ENCODE measurements at regions of chr5 and their contacts with region 1.

Region 1: DNA sequence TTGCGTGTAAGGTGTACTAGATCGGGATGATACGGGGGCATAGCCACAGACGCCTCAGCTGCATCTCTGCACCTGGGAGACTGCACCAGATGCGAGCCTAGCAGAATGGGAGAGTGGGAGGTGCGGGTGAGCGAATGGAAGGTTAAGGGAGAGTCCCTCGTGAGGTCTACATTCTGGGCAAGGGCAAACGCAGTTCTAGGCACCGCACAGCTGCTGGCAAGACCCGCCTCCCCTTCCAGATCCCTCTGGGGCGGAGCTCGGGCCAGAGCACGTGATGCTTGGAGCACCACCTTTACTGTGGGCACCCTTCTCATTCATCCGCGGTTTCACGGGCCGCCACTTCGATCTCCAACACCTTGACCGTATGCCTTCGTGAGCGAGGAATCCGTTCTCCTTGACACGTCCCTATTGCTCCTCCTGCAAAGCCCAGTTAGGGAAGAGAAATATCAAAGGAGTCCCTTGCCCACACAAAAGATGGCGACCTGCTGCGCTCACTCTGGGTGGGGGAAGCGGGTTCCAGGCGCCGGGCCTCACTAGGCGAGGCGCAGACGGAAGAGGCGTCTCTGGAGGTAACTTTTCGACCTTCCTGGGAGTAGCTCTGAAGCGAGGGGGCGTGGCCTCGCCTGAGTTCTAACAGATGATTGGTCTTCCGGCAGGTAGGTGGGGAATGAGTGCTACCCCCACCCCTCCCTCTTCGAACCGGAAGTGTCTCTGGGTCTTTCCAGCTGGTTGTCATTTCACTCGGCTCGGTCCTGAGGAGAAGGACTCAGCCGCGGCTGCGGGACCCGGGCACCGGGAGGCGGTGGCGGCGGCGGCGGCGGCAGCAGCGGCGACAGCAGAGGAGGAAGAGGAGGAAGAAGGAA is at the start of gene CPEB4:
- DNase-seq: peak; percentile 98 to 99
- ATAC-seq: peak; percentile 96 to 99 (median 96)
- H3K4me3 ChIP-seq: peak within 1 kb of the TSS; percentile 72 to 94 (median 82)
- H3K27ac ChIP-seq: peak within 1 kb of the TSS; percentile 74 to 97 (median 90)
- H3K4me1 ChIP-seq: peaks cover 0 to 77% (median 25%) of the 10 kb centered on the region in 9 donors
- H3K27me3 ChIP-seq: no peaks in the 10 kb centered on the region
- CTCF ChIP-seq: no peak
- total RNA-seq, gene CPEB4: 116 to 279 (median 187) TPM

Region 2: DNA sequence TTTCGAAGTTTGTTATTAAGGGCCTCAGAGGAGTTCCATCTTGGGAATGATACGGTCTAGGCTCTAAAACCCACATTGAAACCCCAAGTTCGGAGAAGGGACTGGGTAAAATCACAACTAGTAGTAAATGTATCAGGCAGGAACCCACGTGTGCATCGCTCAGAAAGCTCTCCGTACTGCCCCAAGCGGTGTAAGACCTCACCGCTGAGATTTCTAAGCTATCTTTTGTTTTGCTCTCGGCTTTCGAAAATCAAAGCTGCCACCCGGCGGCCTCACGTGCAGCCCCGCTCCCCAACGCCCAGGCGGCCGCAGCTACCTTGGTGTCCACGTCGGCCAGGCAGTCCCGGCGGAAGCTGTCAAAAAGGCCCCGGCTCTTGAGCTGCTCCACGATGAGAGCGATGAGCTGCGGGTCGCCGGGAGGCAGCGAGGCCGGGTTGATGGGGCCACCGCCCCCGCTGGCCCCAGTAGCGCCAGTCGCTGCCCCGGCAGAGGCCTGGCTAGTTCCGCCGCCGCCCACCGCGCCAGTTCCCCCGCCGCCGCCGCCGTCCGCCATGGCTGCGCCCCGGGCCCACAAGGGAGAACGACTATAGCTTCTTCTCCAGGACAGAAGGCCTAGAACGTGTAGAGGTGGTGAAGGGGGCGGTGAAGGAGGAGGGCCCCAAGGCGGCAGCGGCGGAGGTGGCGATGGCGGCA is 271.8 kb before region 1 on chr5:
- intact Hi-C with region 1: loop called in 6 of 10 experiments (anchors 1 to 10 kb)
- DNase-seq: peak; percentile 43 to 52
- ATAC-seq: peak; percentile 45 to 75 (median 68)
- H3K4me3 ChIP-seq: peak overlapping the region; percentile 62 to 99 (median 96)
- H3K27ac ChIP-seq: peak overlapping the region; percentile 88 to 98 (median 94)
- H3K4me1 ChIP-seq: peaks cover 0 to 59% (median 49%) of the 10 kb centered on the region in 9 donors
- H3K27me3 ChIP-seq: no peaks in the 10 kb centered on the region
- CTCF ChIP-seq: peak in 8 of 9 donors; percentile 34 to 78 (median 64)

Region 3: GRCh38 chr5:173764321-173765029 is 123.4 kb before region 1 on chr5:
- intact Hi-C with region 1: loop called in 6 of 10 experiments (anchors 2 to 10 kb)
- DNase-seq: peak; percentile 79
- ATAC-seq: peak; percentile 24 to 82 (median 66)
- H3K4me3 ChIP-seq: no peak overlapping the region
- H3K27ac ChIP-seq: peak overlapping the region; percentile 2 to 91 (median 76)
- H3K4me1 ChIP-seq: peaks cover 0 to 58% (median 26%) of the 10 kb centered on the region in 9 donors
- H3K27me3 ChIP-seq: no peaks in the 10 kb centered on the region
- CTCF ChIP-seq: no peak

Region 4: GRCh38 chr5:173925448-173926071 is 37.7 kb after region 1 on chr5:
- intact Hi-C with region 1: loop called in 4 of 10 experiments (anchors 2 to 5 kb)
- DNase-seq: peak; percentile 30 to 41
- ATAC-seq: peak in 1 of 8 donors; percentile 46
- H3K4me3 ChIP-seq: no peak overlapping the region
- H3K27ac ChIP-seq: peak overlapping the region in 9 of 10 donors; percentile 45 to 91 (median 85)
- H3K4me1 ChIP-seq: peaks cover 9 to 100% (median 82%) of the 10 kb centered on the region in 9 donors
- H3K27me3 ChIP-seq: no peaks in the 10 kb centered on the region
- CTCF ChIP-seq: peak in 7 of 9 donors; percentile 37 to 70 (median 58)

Region 5: GRCh38 chr5:173954671-173955521 is 67.1 kb after region 1 on chr5:
- intact Hi-C with region 1: loop called in 2 of 10 experiments (anchors 10 kb)
- DNase-seq: peak in 1 of 2 donors; percentile 21
- ATAC-seq: peak; percentile 74 to 93 (median 90)
- H3K4me3 ChIP-seq: no peak overlapping the region
- H3K27ac ChIP-seq: peak overlapping the region; percentile 60 to 86 (median 76)
- H3K4me1 ChIP-seq: peaks cover 0 to 64% (median 22%) of the 10 kb centered on the region in 9 donors
- H3K27me3 ChIP-seq: no peaks in the 10 kb centered on the region
- CTCF ChIP-seq: no peak

Region 6: DNA sequence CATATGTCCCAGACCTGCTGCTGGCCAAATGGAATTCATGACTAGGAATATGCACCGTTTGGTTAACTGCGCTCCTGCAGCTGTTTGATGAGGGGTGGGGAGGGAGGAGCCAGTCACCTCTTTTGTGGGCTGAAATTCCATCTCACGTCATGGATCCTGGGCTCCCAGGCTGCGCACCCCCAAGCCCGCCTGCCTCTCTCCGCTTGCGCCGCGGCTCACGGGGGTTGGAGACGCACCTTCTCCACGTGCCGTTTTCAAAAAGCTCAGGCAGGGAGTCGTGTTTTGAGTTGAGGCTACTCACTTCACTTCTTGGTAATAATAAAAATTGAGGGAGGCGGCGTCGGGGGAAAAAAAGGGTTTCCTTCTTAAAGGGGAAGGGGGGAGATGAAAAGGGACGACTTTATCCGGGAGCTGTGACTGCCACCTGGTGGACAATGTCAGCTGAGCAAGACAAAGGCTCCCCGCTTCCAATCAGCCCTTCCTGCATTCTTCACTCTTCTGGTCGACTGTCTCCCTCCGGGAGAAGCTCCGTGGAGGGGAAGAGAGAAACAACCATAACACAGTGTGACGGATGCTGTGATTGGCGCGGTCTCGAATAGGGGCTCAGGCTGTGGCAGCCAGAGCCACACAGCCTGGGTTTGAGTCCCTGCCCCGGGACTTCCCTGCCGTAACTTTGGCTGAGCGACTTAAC is 85.2 kb after region 1 on chr5:
- intact Hi-C with region 1: loop called in 9 of 10 experiments (anchors 2 to 10 kb)
- DNase-seq: peak; percentile 73 to 86
- ATAC-seq: peak; percentile 67 to 93 (median 87)
- H3K4me3 ChIP-seq: peak overlapping the region; percentile 16 to 59 (median 52)
- H3K27ac ChIP-seq: peak overlapping the region in 8 of 10 donors; percentile 1 to 80 (median 40)
- H3K4me1 ChIP-seq: peaks cover 0 to 21% (median 10%) of the 10 kb centered on the region in 9 donors
- H3K27me3 ChIP-seq: peaks cover 0 to 11% (median 0%) of the 10 kb centered on the region in 7 donors
- CTCF ChIP-seq: peak; percentile 66 to 93 (median 90)